ENCODE measurements at regions of chr19 and their contacts with region 1.

Region 1: GRCh38 chr19:5790573-5791520 is at the start of gene DUS3L:
- DNase-seq: peak; percentile 88 to 98
- ATAC-seq: peak; percentile 95 to 96
- H3K4me3 ChIP-seq: peak within 1 kb of the TSS; percentile 97
- H3K27ac ChIP-seq: peak within 1 kb of the TSS; percentile 99 to 100
- H3K4me1 ChIP-seq: peaks cover 5% of the 10 kb centered on the region; the same call in 2 of the 3 replicates
- CTCF ChIP-seq: no peak
- EP300 ChIP-seq: no peak
- POLR2A ChIP-seq: peak; percentile 44
- RAD21 ChIP-seq: no peak
- polyA plus RNA-seq, gene DUS3L: 15.5 and 16.3 TPM in 2 replicates

Region 2: DNA sequence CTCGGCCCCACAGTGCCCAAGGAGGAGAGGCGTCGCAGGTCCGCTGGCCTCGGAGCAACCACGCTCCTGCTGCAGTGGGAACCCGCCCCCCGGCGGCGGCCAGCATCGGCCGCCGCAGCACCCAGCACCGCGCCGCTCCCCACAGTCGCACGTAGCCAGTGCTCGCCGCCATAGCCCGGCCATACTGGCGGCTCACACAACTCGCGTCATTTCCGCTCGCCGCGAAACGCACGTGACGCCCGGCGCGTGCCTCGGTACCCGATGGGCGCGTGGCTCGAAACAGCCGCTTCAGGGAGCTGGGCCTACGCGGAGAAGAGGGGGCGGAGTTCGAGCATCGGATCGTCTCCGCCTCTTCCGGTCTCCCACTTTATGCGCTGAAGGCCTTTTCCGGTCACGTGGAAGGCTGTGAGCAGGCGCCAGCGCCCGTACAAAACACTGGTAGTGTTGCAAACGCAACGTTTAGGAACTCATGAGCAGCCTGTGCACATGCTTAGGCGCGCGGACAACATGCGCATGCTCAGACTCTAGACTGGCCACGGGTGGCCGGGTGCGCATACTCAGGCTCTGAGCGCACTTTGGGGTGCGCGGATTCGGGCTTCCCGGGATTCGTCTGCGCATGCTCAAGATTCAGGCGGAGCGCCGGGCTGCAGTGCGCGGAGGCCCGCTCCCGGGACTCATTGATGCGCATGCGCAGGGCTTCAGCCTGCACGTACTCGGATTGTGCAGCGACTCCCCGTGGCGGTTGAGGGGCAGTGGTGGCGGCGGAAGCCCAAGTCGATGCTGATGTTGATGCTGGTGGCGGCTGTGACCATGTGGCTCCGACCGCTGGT is 70.7 kb before region 1 on chr19 and contains the starts of genes CATSPERD and LONP1:
- CTCF ChIA-PET with region 1: no interaction called
- POLR2A ChIA-PET with region 1: interaction called, 10 read pairs
- DNase-seq: peak; percentile 94 to 98
- ATAC-seq: peak; percentile 92 to 94
- H3K4me3 ChIP-seq: peak within 1 kb of the TSS; percentile 100
- H3K27ac ChIP-seq: peak within 1 kb of the TSS; percentile 97 to 100
- H3K4me1 ChIP-seq: peaks cover 11% of the 10 kb centered on the region; the same call in 2 of the 3 replicates
- CTCF ChIP-seq: peak; percentile 69
- EP300 ChIP-seq: no peak
- POLR2A ChIP-seq: peak; percentile 61
- RAD21 ChIP-seq: no peak
- polyA plus RNA-seq, gene CATSPERD: 0.03 TPM in 1 of 2 replicates, not detected in the other
- polyA plus RNA-seq, gene LONP1: 41.2 and 42.7 TPM in 2 replicates

Region 3: DNA sequence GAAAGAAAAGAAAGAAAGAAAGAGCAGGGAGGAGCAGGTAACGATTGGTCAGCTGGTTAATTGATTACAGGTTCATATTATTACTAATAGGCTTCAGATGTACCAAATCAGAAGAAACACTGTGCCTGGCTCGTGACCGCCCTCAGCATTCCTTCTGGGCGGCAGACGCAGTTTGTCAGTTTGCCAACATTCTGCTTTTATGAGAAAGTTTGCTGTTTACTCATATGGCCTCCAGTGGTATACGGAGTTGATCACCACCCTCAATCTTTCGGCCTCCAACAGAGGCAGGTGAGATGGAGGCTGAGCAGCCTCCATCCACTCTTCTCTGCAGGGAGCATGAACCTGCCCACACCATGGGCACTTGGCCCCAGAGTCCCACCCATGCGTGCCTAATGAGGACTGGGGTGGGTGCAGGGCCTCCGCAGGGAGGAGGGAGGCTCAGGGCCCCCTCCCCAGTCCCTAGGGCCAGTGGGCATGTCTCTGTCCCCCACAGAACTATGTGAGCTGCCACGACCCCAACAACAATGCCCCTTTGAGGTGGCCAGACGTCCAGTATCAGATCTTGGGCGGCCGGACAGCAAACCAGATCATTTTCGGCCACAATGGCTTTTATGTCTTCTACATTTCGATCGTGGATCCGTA is 15.1 kb before region 1 on chr19:
- CTCF ChIA-PET with region 1: interaction called, 35 read pairs
- POLR2A ChIA-PET with region 1: interaction called, 6 read pairs
- DNase-seq: peak in 1 of 2 experiments; percentile 37
- ATAC-seq: peak; percentile 18 to 49; a peak in 1 of 6 replicates
- H3K4me3 ChIP-seq: no peak overlapping the region
- H3K27ac ChIP-seq: no peak overlapping the region; a peak in 1 of 6 replicates
- H3K4me1 ChIP-seq: peaks cover 5% of the 10 kb centered on the region; the same call in 1 of the 3 replicates
- CTCF ChIP-seq: no peak
- EP300 ChIP-seq: no peak
- POLR2A ChIP-seq: no peak
- RAD21 ChIP-seq: no peak

Region 4: DNA sequence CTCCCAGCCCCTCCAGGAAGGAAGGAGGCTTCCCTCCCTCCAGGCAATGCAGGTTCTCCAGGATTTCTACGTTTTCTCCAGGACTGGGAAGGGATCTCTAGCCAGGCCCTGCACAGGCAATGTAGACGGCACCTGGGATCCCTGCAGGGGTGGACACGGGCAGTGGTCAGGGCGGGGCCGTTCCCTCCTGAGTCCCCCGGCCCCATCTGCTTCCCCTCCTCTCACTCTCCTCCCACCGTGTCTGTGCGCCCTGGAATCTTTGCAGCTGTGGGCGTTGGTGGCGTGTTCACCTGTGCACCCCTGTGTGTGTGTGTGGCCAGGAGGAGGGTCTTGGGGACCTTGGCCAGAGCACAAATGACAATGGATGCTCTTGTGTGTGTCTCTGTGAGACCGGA is 24.0 kb after region 1 on chr19:
- CTCF ChIA-PET with region 1: interaction called, 11 read pairs
- POLR2A ChIA-PET with region 1: no interaction called
- DNase-seq: no peak
- ATAC-seq: peak; percentile 44 to 59; a peak in 5 of 6 replicates
- H3K4me3 ChIP-seq: no peak overlapping the region
- H3K27ac ChIP-seq: no peak overlapping the region
- H3K4me1 ChIP-seq: no peaks in the 10 kb centered on the region
- CTCF ChIP-seq: no peak
- EP300 ChIP-seq: no peak
- POLR2A ChIP-seq: no peak
- RAD21 ChIP-seq: no peak